PC-9 (cell line): ENCODE measurements at regions of chr1 and their contacts with region 1.

Region 1: GRCh38 chr1:181088079-181089016 is at the start of gene IER5:
- DNase-seq: peak; percentile 90 to 98
- H3K4me3 ChIP-seq: peak within 1 kb of the TSS; percentile 91
- H3K27ac ChIP-seq: peak within 1 kb of the TSS; percentile 92
- H3K4me1 ChIP-seq: peaks cover 39% of the 10 kb centered on the region
- H3K27me3 ChIP-seq: no peaks in the 10 kb centered on the region
- CTCF ChIP-seq: 0 out of 2 replicates have a peak, but pooled peaks have one; percentile 20
- total RNA-seq, gene IER5: 21.2 and 23.4 TPM in 2 replicates

Region 2: DNA sequence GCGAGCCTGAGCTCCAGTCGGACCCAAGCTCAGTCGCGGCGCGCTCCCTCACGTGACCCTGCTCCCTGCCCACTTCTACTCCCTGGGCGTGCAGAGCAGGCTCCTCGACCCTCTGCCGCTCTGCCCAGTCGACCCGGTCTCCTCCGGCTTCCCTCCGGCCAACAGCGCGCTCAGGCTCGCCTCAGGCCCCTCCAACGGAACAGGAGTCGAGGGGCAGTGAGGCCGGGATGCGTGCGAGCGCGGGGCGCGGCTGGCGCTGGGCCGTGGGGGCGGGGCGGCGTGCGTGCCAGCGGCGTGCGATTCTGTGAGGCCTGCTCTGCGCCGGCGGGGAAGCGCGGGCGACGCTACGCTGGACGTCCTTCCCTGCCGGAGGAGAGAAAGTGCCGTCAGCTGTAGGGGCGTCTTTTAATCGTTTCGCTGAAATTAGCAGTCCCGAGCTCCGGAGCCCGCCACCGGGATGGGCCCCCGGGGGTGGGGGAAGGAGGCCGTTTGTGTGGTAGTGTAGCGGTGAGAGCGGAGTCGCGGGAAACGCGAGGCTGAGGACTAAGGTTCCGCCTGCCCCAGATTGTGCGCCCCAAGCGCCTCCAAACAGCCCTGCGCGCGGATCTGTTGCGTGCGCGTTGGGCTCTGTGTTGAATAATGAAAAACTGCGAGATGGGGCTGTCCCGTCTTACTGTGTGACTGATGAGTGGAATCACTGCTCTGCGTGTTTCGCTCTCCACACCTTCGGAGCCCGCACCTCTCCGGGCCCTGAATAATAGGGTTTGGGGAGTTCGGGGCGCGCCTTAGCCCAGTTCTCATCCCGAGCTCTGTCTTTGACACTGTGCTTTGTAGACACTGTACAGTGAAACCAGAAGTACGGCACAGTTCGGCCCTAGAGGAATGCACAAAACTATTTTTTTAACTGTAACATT is 585.7 kb before region 1 on chr1 and contains the start of gene ACBD6:
- CTCF ChIA-PET with region 1: no interaction called
- POLR2A ChIA-PET with region 1: interaction called, 14 read pairs
- intact Hi-C with region 1: no loop called
- DNase-seq: peak; percentile 71 to 85
- H3K4me3 ChIP-seq: peak within 1 kb of the TSS; percentile 94
- H3K27ac ChIP-seq: peak within 1 kb of the TSS; percentile 88
- H3K4me1 ChIP-seq: peaks cover 27% of the 10 kb centered on the region
- H3K27me3 ChIP-seq: no peaks in the 10 kb centered on the region
- CTCF ChIP-seq: 0 out of 2 replicates have a peak, but pooled peaks have one; percentile 16
- total RNA-seq, gene ACBD6: 52.2 and 61.0 TPM in 2 replicates

Region 3: DNA sequence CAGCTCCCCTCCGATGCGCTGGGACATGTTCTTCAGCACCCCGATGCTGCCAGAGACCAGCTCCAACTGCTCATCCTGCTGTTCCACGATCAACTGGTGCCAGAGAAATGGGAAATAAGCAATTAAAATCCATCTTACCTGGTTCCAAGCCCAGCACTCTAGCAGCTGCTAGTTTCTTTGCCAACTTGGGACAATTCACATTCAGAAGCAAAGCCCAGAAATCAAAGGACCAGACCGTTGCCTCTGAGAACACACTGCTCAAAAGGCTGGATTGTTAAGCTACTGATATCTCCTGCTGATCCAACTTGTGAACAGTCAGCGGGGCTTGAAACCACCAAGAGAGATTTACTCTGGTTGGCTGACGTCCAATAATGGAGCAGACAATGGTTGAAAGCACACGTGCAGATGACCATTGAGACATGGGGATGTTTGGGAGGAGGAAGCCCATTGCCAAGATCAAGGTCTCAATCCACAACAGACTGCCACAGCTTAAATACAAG is 100.0 kb before region 1 on chr1:
- CTCF ChIA-PET with region 1: no interaction called
- POLR2A ChIA-PET with region 1: no interaction called
- intact Hi-C with region 1: no loop called
- DNase-seq: no peak
- H3K4me3 ChIP-seq: no peak overlapping the region
- H3K27ac ChIP-seq: no peak overlapping the region
- H3K4me1 ChIP-seq: no peaks in the 10 kb centered on the region
- H3K27me3 ChIP-seq: no peaks in the 10 kb centered on the region
- CTCF ChIP-seq: no peak

Region 4: GRCh38 chr1:181021811-181022434 is 66.4 kb before region 1 on chr1:
- CTCF ChIA-PET with region 1: interaction called, 8 read pairs
- POLR2A ChIA-PET with region 1: interaction called, 4 read pairs
- intact Hi-C with region 1: loop called (anchors 1 kb)
- DNase-seq: peak; percentile 54 to 64
- H3K4me3 ChIP-seq: peak overlapping the region; percentile 63
- H3K27ac ChIP-seq: peak overlapping the region; percentile 62
- H3K4me1 ChIP-seq: peaks cover 18% of the 10 kb centered on the region
- H3K27me3 ChIP-seq: no peaks in the 10 kb centered on the region
- CTCF ChIP-seq: no peak

Region 5: GRCh38 chr1:181099152-181100014 is 11.0 kb after region 1 on chr1:
- CTCF ChIA-PET with region 1: interaction called, 3 read pairs
- POLR2A ChIA-PET with region 1: interaction called, 10 read pairs
- intact Hi-C with region 1: loop called (anchors 1 kb)
- DNase-seq: peak in 1 of 2 experiments; percentile 11
- H3K4me3 ChIP-seq: no peak overlapping the region
- H3K27ac ChIP-seq: peak overlapping the region; percentile 96
- H3K4me1 ChIP-seq: peaks cover 68% of the 10 kb centered on the region
- H3K27me3 ChIP-seq: no peaks in the 10 kb centered on the region
- CTCF ChIP-seq: no peak

Region 6: DNA sequence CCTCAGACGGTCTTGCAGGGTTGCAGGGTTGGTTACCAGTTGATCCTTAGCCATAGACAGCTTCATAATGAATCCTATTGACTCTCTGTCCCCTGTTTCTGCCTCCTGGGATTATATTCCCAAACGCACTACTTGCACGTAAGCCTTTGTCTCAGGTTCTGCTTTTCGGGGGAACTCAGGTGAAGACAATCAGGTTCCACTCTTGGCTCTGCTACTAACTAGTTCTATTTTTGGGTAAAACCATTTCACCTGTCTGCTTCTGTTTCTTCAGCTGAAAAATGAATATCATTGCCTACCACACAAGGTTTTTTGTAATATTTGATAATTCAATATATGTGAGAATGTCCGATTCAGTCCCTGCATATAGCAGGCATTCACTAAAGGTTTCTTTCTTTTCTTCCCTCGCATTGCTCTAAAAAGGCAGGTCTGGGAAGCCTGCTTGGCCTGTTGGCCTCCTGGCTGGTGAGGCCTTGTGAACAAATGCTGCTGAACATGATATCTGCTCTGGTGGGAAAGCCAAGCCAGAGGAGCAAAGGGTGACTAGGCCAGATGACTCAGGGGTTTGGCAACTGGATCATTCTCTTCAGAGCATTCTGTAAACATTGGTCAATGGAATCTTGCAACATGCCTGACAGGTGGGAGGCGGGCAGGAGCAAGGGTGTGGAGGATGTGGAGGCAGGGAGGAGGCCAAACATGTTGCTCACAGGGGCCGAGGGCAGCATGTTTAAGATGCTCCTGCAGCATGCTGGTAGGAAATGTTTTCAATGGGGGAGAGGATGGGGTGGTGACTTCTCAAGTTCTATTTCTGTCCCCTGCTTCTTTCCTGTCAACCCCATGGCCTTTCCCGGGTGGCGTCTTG is 24.0 kb after region 1 on chr1:
- CTCF ChIA-PET with region 1: no interaction called
- POLR2A ChIA-PET with region 1: interaction called, 10 read pairs
- intact Hi-C with region 1: loop called (anchors 1 kb)
- DNase-seq: peak; percentile 94 to 99
- H3K4me3 ChIP-seq: peak overlapping the region; percentile 43; the same call in 1 of the 2 replicates
- H3K27ac ChIP-seq: peak overlapping the region; percentile 99
- H3K4me1 ChIP-seq: peaks cover 78% of the 10 kb centered on the region
- H3K27me3 ChIP-seq: no peaks in the 10 kb centered on the region
- CTCF ChIP-seq: no peak

Region 7: DNA sequence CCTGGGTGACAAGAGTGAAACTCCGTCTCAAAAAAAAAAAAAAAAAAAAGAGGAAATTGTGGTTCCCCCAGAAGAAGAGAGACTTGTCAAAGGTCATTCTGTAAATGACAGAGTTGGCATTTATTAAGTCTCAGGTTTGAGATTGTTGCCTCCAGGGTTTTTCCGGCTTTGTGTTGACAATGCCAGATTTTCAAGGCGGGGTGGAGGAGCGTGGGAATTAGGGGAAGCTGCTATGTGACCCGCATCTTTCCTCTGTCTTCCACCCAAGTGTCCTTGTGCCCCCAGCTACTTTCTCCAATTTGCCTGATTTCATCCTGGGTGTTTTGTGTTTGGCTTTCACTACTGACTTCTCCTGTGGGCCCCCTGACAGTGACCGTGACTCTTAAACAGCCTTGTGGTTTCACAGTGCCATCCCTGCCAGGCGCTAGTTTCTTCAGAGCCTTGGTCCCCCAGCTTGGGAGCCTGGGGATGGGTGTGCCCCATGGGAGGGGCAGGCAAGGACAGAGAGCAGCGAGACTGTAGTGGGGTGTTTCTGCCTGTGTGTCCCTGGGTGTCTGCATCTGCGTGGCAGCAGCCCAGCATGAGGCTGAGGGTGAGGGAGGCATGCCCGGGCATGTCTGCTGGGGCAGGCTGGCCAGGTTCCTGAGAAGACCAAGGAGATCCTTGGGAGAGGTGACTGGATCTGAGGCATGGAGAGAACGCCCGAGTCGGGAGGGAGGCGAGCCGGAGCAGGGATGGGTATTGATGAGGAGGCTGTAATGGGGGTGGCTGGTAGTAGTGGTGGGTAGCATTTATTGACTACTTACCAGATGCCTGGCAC is 46.4 kb after region 1 on chr1:
- CTCF ChIA-PET with region 1: no interaction called
- POLR2A ChIA-PET with region 1: interaction called, 4 read pairs
- intact Hi-C with region 1: loop called (anchors 1 kb)
- DNase-seq: peak; percentile 84 to 92
- H3K4me3 ChIP-seq: peak overlapping the region; percentile 26; the same call in 1 of the 2 replicates
- H3K27ac ChIP-seq: peak overlapping the region; percentile 92
- H3K4me1 ChIP-seq: peaks cover 71% of the 10 kb centered on the region
- H3K27me3 ChIP-seq: no peaks in the 10 kb centered on the region
- CTCF ChIP-seq: no peak